ENCODE measurements at regions of chr1 and their contacts with region 1.

Region 1: DNA sequence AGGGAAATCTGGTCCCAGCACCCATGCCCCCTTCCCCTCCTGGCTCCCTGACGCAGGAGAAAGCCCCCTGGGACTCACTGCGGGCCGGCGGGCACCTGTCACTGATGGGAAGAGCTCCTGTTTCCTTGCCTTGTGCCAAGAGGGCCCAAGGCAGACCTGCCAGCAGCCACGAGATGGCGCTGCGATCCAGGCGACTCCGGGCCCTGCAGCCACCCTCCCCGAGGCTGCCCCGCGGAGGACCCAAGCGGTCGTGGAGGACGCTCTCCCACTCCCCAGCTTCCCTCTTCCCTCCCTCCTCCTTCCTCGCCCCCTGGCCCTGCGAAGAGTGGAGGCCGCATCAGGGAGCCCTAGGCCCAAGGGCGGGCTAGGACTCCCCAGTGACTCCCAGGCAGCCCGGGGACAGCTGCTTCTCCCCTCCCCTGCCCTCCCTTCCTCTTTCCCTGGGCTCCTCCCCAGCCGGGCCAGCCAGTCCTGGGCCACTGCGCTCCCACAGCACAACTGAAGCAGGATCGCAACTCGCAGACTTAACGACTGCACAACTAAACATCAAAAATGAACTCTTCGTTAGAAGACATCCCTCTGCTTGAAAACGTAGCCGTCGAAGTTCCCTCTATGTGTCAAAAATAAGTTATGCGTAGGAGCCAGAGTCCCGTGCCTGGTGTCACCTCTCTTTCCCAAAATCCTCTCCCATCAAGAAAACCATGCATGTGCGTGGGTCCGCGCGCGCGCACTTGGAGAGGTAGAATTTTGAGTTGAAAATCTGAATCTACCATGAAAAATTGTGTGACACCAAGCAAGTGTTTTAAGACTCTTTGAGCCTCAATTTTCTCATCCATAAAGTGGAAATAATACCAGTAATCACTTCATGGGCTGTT is 34.2 kb downstream of the BATF3 start:
- DNase-seq: peak; percentile 59 to 87 (median 78)
- ATAC-seq: peak; percentile 93
- H3K4me3 ChIP-seq: peak overlapping the region; percentile 17 to 38
- H3K4me3 Mint-ChIP-seq: peak overlapping the region; percentile 72
- H3K27ac ChIP-seq: no peak overlapping the region
- H3K27ac Mint-ChIP-seq: no peak overlapping the region
- H3K4me1 ChIP-seq: peaks cover 4% of the 10 kb centered on the region
- H3K4me1 Mint-ChIP-seq: peaks cover 8% of the 10 kb centered on the region
- H3K27me3 ChIP-seq: no peaks in the 10 kb centered on the region
- H3K27me3 Mint-ChIP-seq: peaks cover 2% of the 10 kb centered on the region
- CTCF ChIP-seq: peak; percentile 80

Region 2: GRCh38 chr1:212558693-212559480 is 106.6 kb before region 1 on chr1:
- CTCF ChIA-PET with region 1: no interaction called
- POLR2A ChIA-PET with region 1: no interaction called
- intact Hi-C with region 1: no loop called
- DNase-seq: peak; percentile 83 to 97 (median 92)
- ATAC-seq: peak; percentile 96
- H3K4me3 ChIP-seq: peak overlapping the region; percentile 45 to 82
- H3K4me3 Mint-ChIP-seq: peak overlapping the region; percentile 85
- H3K27ac ChIP-seq: peak overlapping the region; percentile 76 to 95
- H3K27ac Mint-ChIP-seq: peak overlapping the region; percentile 94
- H3K4me1 ChIP-seq: peaks cover 5% of the 10 kb centered on the region
- H3K4me1 Mint-ChIP-seq: peaks cover 10% of the 10 kb centered on the region
- H3K27me3 ChIP-seq: peaks cover 0 to 3% of the 10 kb centered on the region in 2 experiments
- H3K27me3 Mint-ChIP-seq: no peaks in the 10 kb centered on the region
- CTCF ChIP-seq: no peak

Region 3: GRCh38 chr1:212678456-212679410 is 13.3 kb after region 1 on chr1:
- CTCF ChIA-PET with region 1: interaction called, 13 read pairs
- POLR2A ChIA-PET with region 1: no interaction called
- intact Hi-C with region 1: no loop called
- DNase-seq: peak in 1 of 9 experiments; percentile 34
- ATAC-seq: no peak
- H3K4me3 ChIP-seq: no peak overlapping the region
- H3K4me3 Mint-ChIP-seq: no peak overlapping the region
- H3K27ac ChIP-seq: no peak overlapping the region
- H3K27ac Mint-ChIP-seq: no peak overlapping the region
- H3K4me1 ChIP-seq: peaks cover 8% of the 10 kb centered on the region
- H3K4me1 Mint-ChIP-seq: peaks cover 12% of the 10 kb centered on the region
- H3K27me3 ChIP-seq: no peaks in the 10 kb centered on the region
- H3K27me3 Mint-ChIP-seq: peaks cover 3% of the 10 kb centered on the region
- CTCF ChIP-seq: no peak

Region 4: GRCh38 chr1:212699104-212699624 is 33.7 kb after region 1 on chr1:
- CTCF ChIA-PET with region 1: interaction called, 17 read pairs
- POLR2A ChIA-PET with region 1: interaction called, 3 read pairs
- intact Hi-C with region 1: loop called in 1 of 2 experiments (anchors 5 kb)
- DNase-seq: peak in 7 of 9 experiments; percentile 13 to 73 (median 48)
- ATAC-seq: peak; percentile 55
- H3K4me3 ChIP-seq: peak overlapping the region; percentile 54
- H3K4me3 Mint-ChIP-seq: peak overlapping the region; percentile 88
- H3K27ac ChIP-seq: no peak overlapping the region
- H3K27ac Mint-ChIP-seq: peak overlapping the region; percentile 46
- H3K4me1 ChIP-seq: peaks cover 13% of the 10 kb centered on the region
- H3K4me1 Mint-ChIP-seq: peaks cover 34% of the 10 kb centered on the region
- H3K27me3 ChIP-seq: peaks cover 0 to 5% of the 10 kb centered on the region in 2 experiments
- H3K27me3 Mint-ChIP-seq: peaks cover 3% of the 10 kb centered on the region
- CTCF ChIP-seq: peak; percentile 48

Region 5: DNA sequence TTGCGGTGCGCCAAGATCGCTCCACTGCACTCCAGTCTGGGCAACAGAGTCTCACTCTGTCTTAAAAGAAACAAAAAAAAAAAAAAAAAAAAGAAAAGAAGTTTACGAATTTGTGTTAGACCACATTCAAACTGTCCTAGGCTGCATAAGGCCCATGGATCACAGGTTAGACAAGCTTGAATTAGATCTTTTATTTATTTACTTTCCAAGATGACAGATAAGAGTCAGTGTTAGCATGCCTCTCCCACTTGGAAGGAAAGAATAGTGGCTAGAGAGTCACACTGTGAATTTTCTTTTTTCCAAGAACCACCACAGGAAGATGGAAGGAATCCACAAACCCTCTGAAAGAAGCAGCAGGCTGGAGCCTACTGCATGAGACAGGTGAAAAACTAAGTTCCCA is 96.8 kb after region 1 on chr1:
- CTCF ChIA-PET with region 1: interaction called, 20 read pairs
- POLR2A ChIA-PET with region 1: no interaction called
- intact Hi-C with region 1: no loop called
- DNase-seq: no peak
- ATAC-seq: no peak
- H3K4me3 ChIP-seq: no peak overlapping the region
- H3K4me3 Mint-ChIP-seq: no peak overlapping the region
- H3K27ac ChIP-seq: no peak overlapping the region
- H3K27ac Mint-ChIP-seq: no peak overlapping the region
- H3K4me1 ChIP-seq: no peaks in the 10 kb centered on the region
- H3K4me1 Mint-ChIP-seq: peaks cover 36% of the 10 kb centered on the region
- H3K27me3 ChIP-seq: no peaks in the 10 kb centered on the region
- H3K27me3 Mint-ChIP-seq: no peaks in the 10 kb centered on the region
- CTCF ChIP-seq: no peak

Region 6: DNA sequence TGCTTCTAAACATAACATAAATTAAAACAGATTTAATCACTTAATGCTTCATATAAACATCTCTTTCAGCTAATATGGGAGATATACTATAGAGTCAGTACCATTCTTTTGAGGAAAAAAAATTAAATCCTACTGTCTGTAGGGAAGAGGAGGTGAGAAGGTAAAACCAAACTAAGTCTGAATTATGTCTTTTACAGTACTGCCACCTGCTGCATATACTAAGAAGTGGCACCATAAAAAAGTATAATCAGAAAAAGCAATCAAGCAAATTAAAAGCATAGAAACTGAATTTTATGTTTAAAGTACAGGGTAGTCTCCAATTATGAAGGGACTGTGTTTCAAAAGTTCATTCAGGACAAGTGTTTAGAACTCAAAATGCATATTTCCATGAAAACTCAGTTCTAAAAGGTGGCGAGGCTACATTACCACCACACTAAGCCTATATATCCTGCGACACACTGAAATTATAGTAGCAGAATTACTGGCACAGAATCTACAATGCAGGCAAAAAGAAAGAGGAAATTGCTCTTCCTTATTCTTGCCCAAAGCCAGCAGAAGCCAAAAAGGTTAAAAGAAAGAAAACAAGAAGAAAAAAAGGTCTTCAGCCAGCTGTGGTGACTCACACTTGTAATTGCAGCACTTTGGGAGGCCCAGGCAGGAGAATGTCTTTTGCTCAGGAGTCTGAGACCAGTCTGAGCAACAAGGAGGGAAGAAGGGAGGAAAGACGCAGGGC is 117.1 kb after region 1 on chr1:
- CTCF ChIA-PET with region 1: interaction called, 95 read pairs
- POLR2A ChIA-PET with region 1: no interaction called
- intact Hi-C with region 1: loop called (anchors 1 kb)
- DNase-seq: peak in 2 of 9 experiments; percentile 28 to 55
- ATAC-seq: peak; percentile 69
- H3K4me3 ChIP-seq: no peak overlapping the region
- H3K4me3 Mint-ChIP-seq: no peak overlapping the region
- H3K27ac ChIP-seq: no peak overlapping the region
- H3K27ac Mint-ChIP-seq: no peak overlapping the region
- H3K4me1 ChIP-seq: no peaks in the 10 kb centered on the region
- H3K4me1 Mint-ChIP-seq: peaks cover 7% of the 10 kb centered on the region
- H3K27me3 ChIP-seq: no peaks in the 10 kb centered on the region
- H3K27me3 Mint-ChIP-seq: no peaks in the 10 kb centered on the region
- CTCF ChIP-seq: peak; percentile 77

Region 7: GRCh38 chr1:212857992-212858460 is 192.5 kb after region 1 on chr1 and contains the start of gene FLVCR1:
- CTCF ChIA-PET with region 1: no interaction called
- POLR2A ChIA-PET with region 1: no interaction called
- intact Hi-C with region 1: no loop called
- DNase-seq: peak; percentile 72 to 95 (median 87)
- ATAC-seq: peak; percentile 95
- H3K4me3 ChIP-seq: peak within 1 kb of the TSS; percentile 82 to 89
- H3K4me3 Mint-ChIP-seq: peak within 1 kb of the TSS; percentile 96
- H3K27ac ChIP-seq: peak within 1 kb of the TSS; percentile 64
- H3K27ac Mint-ChIP-seq: peak within 1 kb of the TSS; percentile 91
- H3K4me1 ChIP-seq: peaks cover 24% of the 10 kb centered on the region
- H3K4me1 Mint-ChIP-seq: peaks cover 21% of the 10 kb centered on the region
- H3K27me3 ChIP-seq: no peaks in the 10 kb centered on the region
- H3K27me3 Mint-ChIP-seq: no peaks in the 10 kb centered on the region
- CTCF ChIP-seq: no peak
- total RNA-seq, gene FLVCR1: 6.5 to 6.6 TPM

Region 8: DNA sequence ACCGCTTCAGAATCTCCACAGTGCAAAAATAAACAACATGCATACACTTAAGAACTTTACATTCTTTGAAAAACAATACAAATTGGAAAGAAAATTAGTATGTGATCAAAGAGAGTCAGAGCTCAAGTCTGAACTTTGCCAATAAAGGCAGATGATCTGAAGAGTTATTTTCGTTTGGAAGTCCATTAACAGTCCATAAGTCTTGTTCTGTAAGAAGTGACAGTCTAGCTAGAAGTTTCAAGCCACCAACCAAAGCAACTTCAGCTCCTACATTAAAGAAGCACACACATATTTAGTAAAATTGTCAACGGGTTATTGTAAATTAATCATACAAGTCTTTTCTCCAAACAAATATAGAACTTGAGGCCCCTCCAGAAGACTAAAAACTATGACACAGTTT is 329.4 kb after region 1 on chr1:
- CTCF ChIA-PET with region 1: interaction called, 30 read pairs
- POLR2A ChIA-PET with region 1: no interaction called
- intact Hi-C with region 1: loop called (anchors 1 kb)
- DNase-seq: no peak
- ATAC-seq: no peak
- H3K4me3 ChIP-seq: no peak overlapping the region
- H3K4me3 Mint-ChIP-seq: no peak overlapping the region
- H3K27ac ChIP-seq: no peak overlapping the region
- H3K27ac Mint-ChIP-seq: no peak overlapping the region
- H3K4me1 ChIP-seq: no peaks in the 10 kb centered on the region
- H3K4me1 Mint-ChIP-seq: peaks cover 3% of the 10 kb centered on the region
- H3K27me3 ChIP-seq: no peaks in the 10 kb centered on the region
- H3K27me3 Mint-ChIP-seq: no peaks in the 10 kb centered on the region
- CTCF ChIP-seq: no peak

Measured in CD8-positive, alpha-beta T cell (primary cell).